ENCODE measurements at regions of chrX and their contacts with region 1.

Region 1: DNA sequence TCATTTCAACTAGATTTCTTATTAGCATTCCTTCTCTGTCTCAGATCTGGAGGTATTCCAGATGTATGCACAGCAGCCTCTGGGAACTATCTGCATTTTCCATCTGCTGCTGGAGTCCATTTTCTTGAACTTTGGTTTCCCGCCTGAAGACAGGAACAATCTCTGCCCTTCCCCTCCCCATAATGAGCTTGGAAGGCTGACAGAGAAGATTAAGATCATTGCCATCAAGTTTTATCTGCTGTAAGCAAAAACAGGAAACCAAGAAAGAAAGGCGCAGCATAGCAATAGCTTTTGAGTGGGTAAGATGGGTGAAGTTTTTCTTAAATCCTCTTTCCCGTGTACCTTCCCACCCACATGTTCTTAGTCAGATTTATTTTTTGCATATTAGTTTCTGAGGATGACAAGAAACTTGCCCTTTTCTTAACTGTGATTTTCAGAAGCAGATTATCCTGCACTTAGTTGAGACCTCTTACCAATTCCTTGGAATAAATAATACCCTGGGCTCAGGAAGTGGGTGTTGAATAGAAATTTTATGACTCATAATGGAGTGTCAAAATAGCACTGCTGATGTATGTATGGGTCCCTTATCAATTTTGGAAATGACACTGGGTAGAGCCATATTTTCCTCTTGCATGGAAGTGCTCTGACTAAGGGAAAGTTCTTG is 78.3 kb downstream of the CT47B1 start:
- DNase-seq: no peak
- ATAC-seq: peak; percentile 76
- H3K4me3 Mint-ChIP-seq: no peak overlapping the region
- H3K27ac Mint-ChIP-seq: peak overlapping the region; percentile 86
- H3K4me1 Mint-ChIP-seq: peaks cover 79% of the 10 kb centered on the region
- H3K27me3 Mint-ChIP-seq: no peaks in the 10 kb centered on the region

Region 2: DNA sequence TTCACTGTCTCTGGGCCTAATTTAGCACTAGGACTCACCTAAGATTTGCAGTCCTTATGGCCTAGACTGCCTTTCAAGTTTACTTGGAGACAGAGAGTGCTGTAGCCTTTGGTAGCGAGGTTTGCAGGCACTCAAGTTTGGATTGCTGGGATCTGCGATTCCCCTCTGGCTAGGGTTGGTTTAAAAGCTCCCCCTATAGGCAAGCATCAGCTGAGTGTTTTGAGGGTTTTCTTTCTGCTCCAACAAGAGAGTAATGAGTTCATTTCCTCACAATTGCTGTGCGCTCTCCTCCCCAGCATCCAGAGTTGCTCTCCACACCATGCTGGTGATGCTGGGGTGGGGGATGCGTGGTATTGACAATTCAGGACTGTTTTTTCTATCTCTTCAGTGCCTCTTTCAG is 457.0 kb after region 1 on chrX:
- CTCF ChIA-PET with region 1: no interaction called
- POLR2A ChIA-PET with region 1: no interaction called
- intact Hi-C with region 1: loop called in 1 of 2 experiments (anchors 5 kb)
- DNase-seq: no peak
- ATAC-seq: no peak
- H3K4me3 Mint-ChIP-seq: no peak overlapping the region
- H3K27ac Mint-ChIP-seq: no peak overlapping the region
- H3K4me1 Mint-ChIP-seq: peaks cover 16% of the 10 kb centered on the region
- H3K27me3 Mint-ChIP-seq: no peaks in the 10 kb centered on the region

Measured in activated CD4-positive, alpha-beta T cell treated with anti-CD3 and anti-CD28 coated beads for 36 hours (primary cell).